K562 (cell line): ENCODE measurements at regions of chr18 and their contacts with region 1.

Region 1: DNA sequence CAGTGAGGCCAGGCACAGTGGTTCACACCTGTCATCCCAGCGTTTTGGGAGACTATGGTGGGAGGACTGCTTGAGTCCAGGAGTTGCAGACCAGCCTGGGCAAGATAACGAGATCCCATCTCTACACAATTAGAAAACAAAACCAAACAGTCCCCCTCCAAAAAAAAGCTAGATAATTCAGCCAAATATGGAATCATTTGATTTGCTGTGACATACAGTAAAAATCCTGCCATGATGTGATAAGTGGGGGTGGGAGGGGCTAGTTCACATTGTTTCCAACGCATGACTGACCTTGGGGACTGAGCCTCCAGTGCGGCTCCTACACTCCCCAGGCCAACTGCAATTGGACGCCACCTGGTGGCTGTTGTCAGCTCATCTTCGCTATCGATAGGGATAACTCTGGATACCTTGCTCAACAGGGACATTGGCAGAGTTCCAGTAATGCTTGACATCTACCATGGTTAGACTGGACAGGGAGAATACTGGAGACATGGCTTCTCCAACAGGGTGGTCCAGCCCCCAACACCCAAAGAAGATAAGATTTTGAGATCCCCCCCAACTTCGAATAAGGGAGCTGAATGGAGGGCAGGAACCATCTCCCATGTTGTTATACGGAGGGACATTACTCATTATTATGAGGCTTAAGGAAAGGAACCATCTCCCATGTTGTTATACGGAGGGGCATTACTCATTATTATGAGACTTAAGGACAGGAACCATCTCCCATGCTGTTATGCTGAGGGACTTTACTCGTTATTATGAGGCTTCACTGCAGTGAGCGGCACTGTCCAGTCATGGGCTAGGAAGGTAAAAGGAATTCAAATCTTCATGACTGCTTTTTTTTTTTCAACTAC is 135.9 kb downstream of the TGIF1 start:
- DNase-seq: peak; percentile 90 to 98 (median 93)
- ATAC-seq: peak; percentile 96
- H3K4me3 ChIP-seq: no peak overlapping the region
- H3K27ac ChIP-seq: peak overlapping the region; percentile 64
- H3K4me1 ChIP-seq: peaks cover 25 to 32% of the 10 kb centered on the region in 2 experiments
- H3K27me3 ChIP-seq: no peaks in the 10 kb centered on the region
- CTCF ChIP-seq: peak; percentile 94 to 98 (median 98)
- EP300 ChIP-seq: peak; percentile 77
- POLR2A ChIP-seq: no peak
- RAD21 ChIP-seq: peak; percentile 96 to 97

Region 2: DNA sequence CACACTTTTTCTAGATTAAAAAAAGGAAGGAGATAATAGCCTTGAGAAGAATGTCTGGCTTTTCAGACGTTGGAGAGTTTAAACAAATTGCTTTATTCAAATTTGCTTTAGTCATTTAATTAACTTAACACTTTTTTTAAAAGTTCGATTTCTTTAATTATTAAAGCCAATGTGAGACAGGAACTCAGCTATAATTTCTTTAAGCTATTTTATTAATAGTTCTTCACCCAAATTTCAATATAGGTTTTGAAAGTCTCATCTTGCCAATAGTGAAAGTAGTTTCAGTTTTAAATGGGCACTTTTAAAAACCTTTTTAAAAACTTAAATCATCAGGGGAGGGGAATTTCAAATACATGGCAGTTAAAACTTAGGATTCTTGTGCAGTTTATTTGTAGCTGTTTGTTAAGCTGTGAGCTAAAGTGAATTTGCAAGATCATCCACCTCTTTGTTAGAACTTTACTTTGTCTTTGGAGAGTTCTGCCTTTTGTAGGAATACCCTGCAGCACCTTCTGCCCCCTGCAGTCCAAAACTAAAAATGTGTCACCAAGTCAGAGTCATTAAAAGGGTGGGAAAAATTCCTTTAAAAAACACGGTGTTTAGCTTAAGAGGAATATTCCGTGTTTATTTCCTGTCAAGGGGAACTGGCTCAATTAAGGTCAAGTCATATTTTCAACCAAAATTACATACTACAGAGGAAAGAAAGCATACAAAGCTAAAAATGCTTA is 131.4 kb before region 1 on chr18:
- CTCF ChIA-PET with region 1: interaction called, 7 read pairs
- POLR2A ChIA-PET with region 1: interaction called, 10 read pairs
- in situ Hi-C with region 1: no loop called
- intact Hi-C with region 1: no loop called
- DNase-seq: peak; percentile 58 to 84 (median 68)
- ATAC-seq: peak; percentile 10
- H3K4me3 ChIP-seq: peak overlapping the region; percentile 87
- H3K27ac ChIP-seq: peak overlapping the region; percentile 86; the same call in 2 of the 3 replicates
- H3K4me1 ChIP-seq: peaks cover 2 to 25% of the 10 kb centered on the region in 2 experiments
- H3K27me3 ChIP-seq: no peaks in the 10 kb centered on the region
- CTCF ChIP-seq: peak; percentile 73 to 93 (median 77); a peak in 5 of 6 replicates
- EP300 ChIP-seq: no peak
- POLR2A ChIP-seq: no peak
- RAD21 ChIP-seq: peak; percentile 80 to 85

Region 3: GRCh38 chr18:3511922-3512372 is 73.9 kb before region 1 on chr18:
- CTCF ChIA-PET with region 1: no interaction called
- POLR2A ChIA-PET with region 1: no interaction called
- in situ Hi-C with region 1: no loop called
- intact Hi-C with region 1: loop called (anchors 5 kb)
- DNase-seq: peak in 2 of 4 experiments; percentile 64 to 66
- ATAC-seq: peak; percentile 83
- H3K4me3 ChIP-seq: no peak overlapping the region
- H3K27ac ChIP-seq: peak overlapping the region; percentile 11; the same call in 1 of the 3 replicates
- H3K4me1 ChIP-seq: peaks cover 3 to 14% of the 10 kb centered on the region in 2 experiments; a peak in 4 of 5 replicates
- H3K27me3 ChIP-seq: no peaks in the 10 kb centered on the region
- CTCF ChIP-seq: no peak
- EP300 ChIP-seq: peak; percentile 86
- POLR2A ChIP-seq: no peak
- RAD21 ChIP-seq: no peak

Region 4: GRCh38 chr18:3806656-3807055 is 220.8 kb after region 1 on chr18:
- CTCF ChIA-PET with region 1: no interaction called
- POLR2A ChIA-PET with region 1: no interaction called
- in situ Hi-C with region 1: no loop called
- intact Hi-C with region 1: no loop called
- DNase-seq: no peak
- ATAC-seq: no peak; the same call in 2 of the 3 replicates
- H3K4me3 ChIP-seq: no peak overlapping the region
- H3K27ac ChIP-seq: no peak overlapping the region
- H3K4me1 ChIP-seq: no peaks in the 10 kb centered on the region
- H3K27me3 ChIP-seq: peaks cover 11 to 20% of the 10 kb centered on the region in 2 experiments
- CTCF ChIP-seq: no peak
- EP300 ChIP-seq: no peak
- POLR2A ChIP-seq: no peak
- RAD21 ChIP-seq: no peak